Adrenal gland (tissue), 19 donors: ENCODE measurements at regions of chr16 and their contacts with region 1.

Region 1: GRCh38 chr16:72467157-72467759 is 295.3 kb upstream of the PMFBP1 start:
- DNase-seq: peak in 1 of 7 donors; percentile 23
- H3K4me3 ChIP-seq: no peak overlapping the region
- H3K27ac ChIP-seq: no peak overlapping the region
- H3K4me1 ChIP-seq: no peaks in the 10 kb centered on the region
- H3K27me3 ChIP-seq: no peaks in the 10 kb centered on the region
- CTCF ChIP-seq: peak in 5 of 6 experiments; percentile 45 to 68 (median 59)
- POLR2A ChIP-seq: no peak

Region 2: DNA sequence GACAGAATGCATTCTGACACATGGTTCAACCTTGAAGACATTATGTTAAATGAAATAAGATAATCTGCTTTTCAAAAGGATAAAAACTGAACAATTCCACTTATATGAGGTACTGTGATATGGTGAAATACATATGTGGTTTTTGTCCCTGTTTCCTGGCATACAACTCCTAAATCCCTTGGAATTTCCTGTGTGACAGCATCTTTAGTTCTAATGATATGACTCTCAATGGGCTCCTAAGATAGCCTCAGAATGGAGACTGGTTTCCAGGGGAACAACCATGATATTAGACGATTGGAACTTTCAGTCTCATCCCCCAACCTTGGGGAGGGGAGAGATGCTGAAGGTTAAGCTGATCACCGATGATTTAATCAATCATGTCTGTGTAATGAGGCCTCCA is 705.1 kb before region 1 on chr16:
- intact Hi-C with region 1: no loop called
- DNase-seq: no peak
- H3K4me3 ChIP-seq: no peak overlapping the region
- H3K27ac ChIP-seq: peak overlapping the region in 1 of 5 donors; percentile 6
- H3K4me1 ChIP-seq: peaks cover 19 to 29% of the 10 kb centered on the region in 2 donors
- H3K27me3 ChIP-seq: no peaks in the 10 kb centered on the region
- CTCF ChIP-seq: no peak
- POLR2A ChIP-seq: no peak

Region 3: GRCh38 chr16:72124761-72125634 is 342.3 kb before region 1 on chr16:
- intact Hi-C with region 1: loop called (anchors 10 kb)
- DNase-seq: peak; percentile 69 to 82 (median 72)
- H3K4me3 ChIP-seq: no peak overlapping the region
- H3K27ac ChIP-seq: peak overlapping the region in 3 of 5 donors; percentile 13 to 74 (median 59)
- H3K4me1 ChIP-seq: peaks cover 0 to 6% of the 10 kb centered on the region in 2 donors
- H3K27me3 ChIP-seq: no peaks in the 10 kb centered on the region
- CTCF ChIP-seq: peak; percentile 66 to 83 (median 76)
- POLR2A ChIP-seq: no peak

Region 4: DNA sequence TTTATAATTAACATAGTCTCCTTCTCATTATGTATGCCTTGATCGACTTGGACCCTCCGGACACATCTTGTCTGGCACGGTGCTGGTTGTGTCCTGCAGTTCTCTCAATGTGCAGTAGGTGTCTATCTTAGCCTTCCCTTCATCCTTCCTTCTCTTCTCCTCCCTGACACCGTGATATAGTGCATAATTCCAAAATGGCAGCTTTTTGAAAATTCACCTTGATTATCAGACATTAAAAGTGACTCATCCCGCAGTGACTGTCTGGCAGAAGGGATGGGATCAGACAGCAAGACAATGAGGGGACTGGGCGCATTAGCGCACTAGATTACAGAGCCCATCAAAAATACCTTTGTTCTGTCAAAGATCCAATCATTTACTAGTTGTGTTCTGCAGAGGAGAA is 225.3 kb before region 1 on chr16:
- intact Hi-C with region 1: loop called (anchors 5 to 10 kb)
- DNase-seq: peak in 6 of 7 donors; percentile 15 to 64 (median 28)
- H3K4me3 ChIP-seq: no peak overlapping the region
- H3K27ac ChIP-seq: no peak overlapping the region
- H3K4me1 ChIP-seq: no peaks in the 10 kb centered on the region
- H3K27me3 ChIP-seq: no peaks in the 10 kb centered on the region
- CTCF ChIP-seq: peak; percentile 51 to 72 (median 66)
- POLR2A ChIP-seq: no peak

Region 5: DNA sequence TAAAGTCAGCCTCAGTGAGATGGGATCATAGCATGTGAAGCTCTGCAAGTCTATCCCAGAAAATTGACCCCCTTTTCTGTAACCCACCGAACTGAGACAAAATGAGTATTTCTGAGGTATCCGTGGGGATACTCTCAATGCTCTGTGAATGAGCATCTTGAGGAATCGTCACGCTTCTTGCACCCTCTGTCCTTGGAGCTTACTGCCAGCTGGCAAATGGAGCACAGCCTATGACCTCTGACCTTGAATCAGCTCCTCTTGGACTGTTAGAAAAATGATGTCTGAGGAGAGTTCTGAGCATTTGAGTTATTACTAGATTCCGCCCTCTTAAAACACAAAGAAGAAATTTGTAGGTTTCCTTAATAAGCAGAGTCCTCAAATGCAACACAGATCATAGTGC is 238.5 kb after region 1 on chr16:
- intact Hi-C with region 1: no loop called
- DNase-seq: peak in 1 of 7 donors; percentile 24
- H3K4me3 ChIP-seq: no peak overlapping the region
- H3K27ac ChIP-seq: no peak overlapping the region
- H3K4me1 ChIP-seq: no peaks in the 10 kb centered on the region
- H3K27me3 ChIP-seq: no peaks in the 10 kb centered on the region
- CTCF ChIP-seq: no peak
- POLR2A ChIP-seq: no peak